ENCODE measurements at regions of chr4 and their contacts with region 1.

Region 1: DNA sequence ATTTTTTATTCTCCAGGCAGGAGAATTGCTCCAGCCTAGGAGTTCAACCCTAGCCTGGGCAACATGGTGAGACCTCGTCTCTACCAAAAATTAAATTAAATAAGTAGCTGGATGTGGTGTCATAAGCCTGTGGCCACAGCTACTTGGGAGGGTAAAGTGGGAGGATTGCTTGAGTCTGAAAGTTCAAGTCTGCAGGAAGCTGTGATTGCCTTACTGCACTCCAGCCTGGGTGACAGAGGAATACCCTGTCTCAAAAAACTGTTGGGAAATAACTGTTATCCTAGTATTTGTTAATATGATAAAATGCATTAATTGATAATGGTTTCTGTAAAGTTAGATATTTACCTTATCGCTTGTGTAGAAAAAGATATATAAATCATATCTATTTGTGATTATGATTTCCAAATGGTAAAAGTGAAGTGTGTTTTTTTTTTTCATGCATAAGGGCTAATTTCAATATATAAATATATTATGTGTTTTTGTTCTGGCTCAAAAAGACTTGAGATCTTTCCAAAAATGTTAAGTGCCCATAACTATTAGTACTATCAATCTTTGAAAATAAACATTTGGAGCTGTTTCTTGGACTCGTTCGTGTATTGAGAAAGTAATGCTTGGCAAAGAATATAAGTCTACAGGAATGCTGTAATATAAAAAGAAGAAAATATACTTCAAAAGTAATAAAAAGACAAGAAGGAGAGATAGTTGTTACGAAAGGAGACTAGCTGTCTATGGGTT is 396.6 kb downstream of the ADGRL3 start:
- DNase-seq: no peak
- ATAC-seq: no peak; the same call in 1 of the 2 replicates
- H3K4me3 ChIP-seq: no peak overlapping the region
- H3K27ac ChIP-seq: no peak overlapping the region
- H3K4me1 ChIP-seq: no peaks in the 10 kb centered on the region
- H3K27me3 ChIP-seq: no peaks in the 10 kb centered on the region
- CTCF ChIP-seq: no peak
- POLR2A ChIP-seq: no peak
- RAD21 ChIP-seq: no peak

Region 2: DNA sequence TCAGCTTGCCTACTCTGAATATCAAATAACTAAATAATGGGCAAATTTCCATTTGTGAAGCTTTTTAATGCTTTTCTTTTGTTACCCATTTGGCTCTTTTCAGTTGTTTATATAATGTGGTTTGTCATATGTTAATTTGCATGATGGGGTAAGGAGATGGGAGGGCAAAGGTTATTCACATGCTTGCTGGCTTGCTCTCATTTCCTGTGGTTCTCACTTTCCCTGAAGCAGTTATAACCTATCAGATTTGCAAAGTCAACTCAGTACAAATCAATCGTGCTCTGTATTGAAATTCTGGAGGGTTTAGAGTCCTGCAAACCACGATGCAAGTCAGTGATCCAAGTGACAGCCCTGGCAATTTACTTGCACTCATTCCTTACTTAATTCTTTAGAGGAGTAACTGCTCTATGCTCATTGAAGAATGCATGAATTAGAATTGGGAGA is 314.6 kb after region 1 on chr4:
- CTCF ChIA-PET with region 1: no interaction called
- POLR2A ChIA-PET with region 1: no interaction called
- dilution Hi-C with region 1: no loop called
- in situ Hi-C with region 1: no loop called
- intact Hi-C with region 1: no loop called
- DNase-seq: no peak
- ATAC-seq: no peak
- H3K4me3 ChIP-seq: no peak overlapping the region
- H3K27ac ChIP-seq: no peak overlapping the region
- H3K4me1 ChIP-seq: no peaks in the 10 kb centered on the region
- H3K27me3 ChIP-seq: no peaks in the 10 kb centered on the region
- CTCF ChIP-seq: no peak
- POLR2A ChIP-seq: no peak
- RAD21 ChIP-seq: no peak

Region 3: DNA sequence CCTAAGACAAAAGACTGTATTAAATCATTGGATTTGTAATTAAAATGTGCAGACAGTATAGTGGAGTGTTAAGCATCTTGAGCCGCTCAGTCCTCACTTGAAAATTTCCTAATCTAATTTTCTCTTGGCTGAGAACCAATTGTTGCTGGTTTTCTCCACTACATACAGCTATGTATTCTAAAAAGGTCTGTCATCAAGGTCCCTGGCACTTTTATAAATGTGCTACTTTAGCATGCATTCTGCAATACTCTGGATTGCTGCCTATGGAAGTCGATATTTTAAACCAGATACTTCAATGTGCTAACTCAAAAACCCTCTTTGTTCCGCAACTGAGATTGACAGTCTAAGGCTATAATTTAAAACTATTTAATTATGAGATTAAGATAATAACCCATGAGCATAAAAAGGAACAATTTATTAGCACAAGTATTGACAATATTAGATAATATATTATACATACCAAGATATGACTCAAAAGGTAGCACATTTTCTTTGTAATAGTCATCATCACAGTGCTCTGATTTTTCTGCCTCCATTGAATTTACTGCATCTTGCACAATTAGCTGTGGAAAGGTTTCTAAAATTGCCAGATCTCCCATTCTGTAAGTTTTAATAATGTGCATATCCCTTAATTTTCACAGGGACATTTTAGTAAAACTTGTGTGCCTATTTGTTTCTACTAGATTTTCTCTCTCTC is 418.4 kb after region 1 on chr4:
- CTCF ChIA-PET with region 1: no interaction called
- POLR2A ChIA-PET with region 1: interaction called, 12 read pairs
- dilution Hi-C with region 1: no loop called
- in situ Hi-C with region 1: no loop called
- intact Hi-C with region 1: no loop called
- DNase-seq: no peak
- ATAC-seq: no peak
- H3K4me3 ChIP-seq: no peak overlapping the region
- H3K27ac ChIP-seq: no peak overlapping the region
- H3K4me1 ChIP-seq: no peaks in the 10 kb centered on the region
- H3K27me3 ChIP-seq: no peaks in the 10 kb centered on the region
- CTCF ChIP-seq: no peak
- POLR2A ChIP-seq: no peak
- RAD21 ChIP-seq: no peak